Posterior vena cava (tissue), 2 donors: ENCODE measurements at regions of chr14 and their contacts with region 1.

Region 1: DNA sequence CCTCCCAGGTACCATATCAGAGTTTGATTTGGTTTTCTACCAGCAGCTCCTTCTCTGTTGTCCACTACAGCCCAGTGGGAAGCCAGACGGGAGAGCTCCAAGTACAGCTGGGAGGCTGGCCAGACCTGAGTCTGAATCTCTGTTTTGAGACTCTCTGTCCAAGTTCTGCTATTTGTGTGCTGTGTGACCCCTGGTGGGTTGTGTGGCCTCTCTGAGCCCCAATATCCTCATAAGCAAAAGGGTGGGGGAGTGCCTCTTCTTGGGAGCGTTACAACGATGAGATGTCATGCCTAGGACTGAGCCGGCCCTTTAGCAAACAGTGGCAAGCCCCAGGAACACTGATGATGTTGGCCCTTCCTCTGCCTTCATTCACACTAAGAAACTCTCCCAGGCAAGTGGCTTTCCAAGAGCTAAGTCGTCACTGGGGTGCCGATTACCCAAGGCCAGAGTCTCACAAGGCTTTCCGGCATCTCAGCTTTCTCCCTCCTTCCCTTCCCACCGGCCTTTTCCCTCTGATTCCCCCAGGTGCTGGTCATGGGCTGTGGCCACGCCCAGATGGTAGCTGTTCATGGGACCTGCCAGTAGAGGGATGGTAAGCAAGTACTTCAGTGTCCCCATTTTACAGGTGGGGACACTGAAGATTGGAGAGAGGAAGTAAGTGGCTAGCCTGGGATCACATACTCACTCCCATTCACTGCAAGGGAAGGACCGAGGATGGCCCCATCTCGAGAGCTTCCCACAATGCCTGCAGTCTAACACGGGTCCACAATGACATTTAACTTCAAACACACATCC is 47.7 kb downstream of the BCL11B start:
- DNase-seq: no peak

Region 2: GRCh38 chr14:99155173-99156089 is 68.9 kb before region 1 on chr14:
- intact Hi-C with region 1: no loop called
- DNase-seq: no peak

Region 3: GRCh38 chr14:99210333-99210732 is 14.0 kb before region 1 on chr14:
- intact Hi-C with region 1: loop called in 1 of 2 experiments (anchors 1 kb)
- DNase-seq: no peak

Region 4: DNA sequence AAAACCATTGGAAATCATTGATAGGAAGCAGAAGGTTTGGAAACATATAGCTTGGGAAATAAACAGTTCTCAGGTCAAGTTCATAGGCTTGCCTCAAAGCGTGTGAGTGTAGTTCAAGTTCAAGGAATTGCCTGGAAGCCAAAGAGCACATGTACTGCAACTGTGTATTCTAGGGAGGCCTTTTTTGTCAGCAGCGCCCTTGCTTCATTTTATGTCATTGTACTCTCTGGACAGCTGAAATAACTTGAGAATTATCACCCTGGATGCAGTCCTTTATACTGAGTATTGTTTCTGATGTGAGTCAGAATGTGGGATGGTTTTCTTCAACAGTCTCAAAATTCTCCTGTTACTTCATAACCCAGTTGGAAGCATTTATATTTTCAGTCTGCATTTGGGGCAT is 824.9 kb after region 1 on chr14:
- intact Hi-C with region 1: no loop called
- DNase-seq: no peak